ENCODE measurements at regions of chr6 and their contacts with region 1.

Region 1: DNA sequence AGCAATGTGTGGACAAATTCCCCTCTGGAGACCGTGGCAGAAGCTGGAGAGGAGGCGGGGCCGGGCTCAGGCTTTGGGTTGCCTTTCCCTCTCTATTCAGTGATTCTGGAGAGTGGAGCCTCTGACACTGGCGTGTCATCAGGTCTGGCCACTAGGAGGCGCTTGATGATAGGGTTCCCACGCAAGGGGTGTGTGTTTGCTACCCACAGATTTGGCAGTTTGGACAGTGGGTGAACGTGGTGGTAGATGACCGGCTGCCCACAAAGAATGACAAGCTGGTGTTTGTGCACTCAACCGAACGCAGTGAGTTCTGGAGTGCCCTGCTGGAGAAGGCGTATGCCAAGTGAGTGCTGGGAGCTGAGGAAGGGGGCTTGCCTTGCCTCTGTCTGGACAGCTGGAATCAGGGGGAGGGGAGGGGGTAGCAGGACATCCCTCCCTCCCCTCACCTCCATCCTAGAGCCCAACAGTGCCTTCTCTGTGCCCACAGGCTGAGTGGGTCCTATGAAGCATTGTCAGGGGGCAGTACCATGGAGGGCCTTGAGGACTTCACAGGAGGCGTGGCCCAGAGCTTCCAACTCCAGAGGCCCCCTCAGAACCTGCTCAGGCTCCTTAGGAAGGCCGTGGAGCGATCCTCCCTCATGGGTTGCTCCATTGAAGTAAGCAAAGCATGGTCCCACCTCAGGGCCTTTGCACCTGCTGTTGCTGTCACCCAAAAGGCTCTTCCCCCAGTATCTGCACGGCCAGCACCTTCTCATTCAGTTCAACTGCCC is 14.3 kb downstream of the CAPN11 start:
- DNase-seq: peak; percentile 88
- ATAC-seq: peak; percentile 90
- H3K4me3 Mint-ChIP-seq: no peak overlapping the region
- H3K27ac Mint-ChIP-seq: no peak overlapping the region
- H3K4me1 Mint-ChIP-seq: peaks cover 10% of the 10 kb centered on the region
- H3K27me3 Mint-ChIP-seq: peaks cover 5% of the 10 kb centered on the region; the same call in 1 of the 2 replicates
- CTCF ChIP-seq: peak; percentile 88

Region 2: GRCh38 chr6:42819803-42820511 is 1353.0 kb before region 1 on chr6:
- CTCF ChIA-PET with region 1: no interaction called
- POLR2A ChIA-PET with region 1: no interaction called
- DNase-seq: no peak
- ATAC-seq: peak; percentile 90
- H3K4me3 Mint-ChIP-seq: no peak overlapping the region
- H3K27ac Mint-ChIP-seq: peak overlapping the region; percentile 70
- H3K4me1 Mint-ChIP-seq: peaks cover 34% of the 10 kb centered on the region
- H3K27me3 Mint-ChIP-seq: no peaks in the 10 kb centered on the region
- CTCF ChIP-seq: no peak

Region 3: DNA sequence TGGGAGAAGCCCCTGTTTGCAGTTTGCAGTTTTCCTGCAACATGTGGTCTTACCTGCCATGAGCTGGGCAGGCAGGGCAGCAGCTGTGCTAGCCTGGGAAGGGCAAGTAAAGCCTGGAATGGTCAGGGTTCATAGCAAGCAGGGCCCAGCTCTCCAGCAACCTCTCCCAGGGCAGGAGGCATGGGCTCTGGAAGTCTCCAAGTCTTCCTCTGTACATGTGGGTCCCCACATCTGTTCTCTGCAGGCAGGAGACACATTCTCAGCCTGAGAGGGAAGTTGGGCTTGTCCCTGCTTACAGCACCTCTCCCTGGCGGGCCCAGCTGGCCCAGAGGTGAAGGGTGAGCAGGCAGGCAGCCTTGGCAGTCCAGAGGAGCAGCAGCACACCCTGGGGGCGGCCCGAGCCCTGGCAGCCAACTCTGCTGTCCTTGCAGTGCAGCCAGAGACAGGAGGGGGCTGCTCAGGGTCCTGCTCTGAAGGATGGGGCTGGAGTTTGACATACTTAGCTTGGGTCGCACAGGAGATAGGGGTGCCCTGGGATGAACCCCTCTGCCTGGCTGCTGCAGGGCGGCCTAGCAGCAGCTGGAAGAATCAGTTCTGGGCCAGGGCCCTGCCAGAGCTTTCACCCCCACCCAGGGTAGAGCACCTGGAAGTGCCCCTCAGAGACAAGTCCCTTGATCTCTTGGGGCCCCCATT is 221.7 kb before region 1 on chr6:
- CTCF ChIA-PET with region 1: no interaction called
- POLR2A ChIA-PET with region 1: no interaction called
- DNase-seq: peak; percentile 90
- ATAC-seq: peak; percentile 95
- H3K4me3 Mint-ChIP-seq: no peak overlapping the region
- H3K27ac Mint-ChIP-seq: no peak overlapping the region
- H3K4me1 Mint-ChIP-seq: peaks cover 4% of the 10 kb centered on the region
- H3K27me3 Mint-ChIP-seq: no peaks in the 10 kb centered on the region
- CTCF ChIP-seq: no peak; the same call in none of the 2 replicates

Region 4: DNA sequence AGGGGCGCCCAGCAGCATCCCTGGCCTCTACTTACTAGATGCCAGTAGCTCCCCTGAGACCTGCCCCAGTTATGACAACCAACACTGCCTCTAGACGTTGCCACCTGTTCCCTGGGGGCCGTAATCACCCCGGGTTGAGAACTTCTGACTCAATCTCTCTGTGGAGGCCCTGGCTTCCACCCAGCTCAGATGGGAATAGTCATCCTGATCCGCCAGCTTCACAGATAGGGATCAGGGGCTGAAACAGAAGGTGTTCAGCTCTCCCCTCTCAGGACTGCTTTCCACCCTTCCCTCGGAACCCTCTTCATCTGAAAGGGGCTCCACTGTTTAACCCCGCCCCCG is 10.9 kb before region 1 on chr6:
- CTCF ChIA-PET with region 1: interaction called, 22 read pairs
- POLR2A ChIA-PET with region 1: no interaction called
- DNase-seq: no peak
- ATAC-seq: no peak
- H3K4me3 Mint-ChIP-seq: no peak overlapping the region
- H3K27ac Mint-ChIP-seq: no peak overlapping the region
- H3K4me1 Mint-ChIP-seq: peaks cover 45% of the 10 kb centered on the region
- H3K27me3 Mint-ChIP-seq: no peaks in the 10 kb centered on the region
- CTCF ChIP-seq: no peak

Region 5: GRCh38 chr6:44192428-44193041 is 19.6 kb after region 1 on chr6:
- CTCF ChIA-PET with region 1: interaction called, 14 read pairs
- POLR2A ChIA-PET with region 1: interaction called, 3 read pairs
- DNase-seq: no peak
- ATAC-seq: peak; percentile 93
- H3K4me3 Mint-ChIP-seq: peak overlapping the region; percentile 32
- H3K27ac Mint-ChIP-seq: peak overlapping the region; percentile 68
- H3K4me1 Mint-ChIP-seq: peaks cover 17% of the 10 kb centered on the region
- H3K27me3 Mint-ChIP-seq: no peaks in the 10 kb centered on the region
- CTCF ChIP-seq: no peak

Region 6: DNA sequence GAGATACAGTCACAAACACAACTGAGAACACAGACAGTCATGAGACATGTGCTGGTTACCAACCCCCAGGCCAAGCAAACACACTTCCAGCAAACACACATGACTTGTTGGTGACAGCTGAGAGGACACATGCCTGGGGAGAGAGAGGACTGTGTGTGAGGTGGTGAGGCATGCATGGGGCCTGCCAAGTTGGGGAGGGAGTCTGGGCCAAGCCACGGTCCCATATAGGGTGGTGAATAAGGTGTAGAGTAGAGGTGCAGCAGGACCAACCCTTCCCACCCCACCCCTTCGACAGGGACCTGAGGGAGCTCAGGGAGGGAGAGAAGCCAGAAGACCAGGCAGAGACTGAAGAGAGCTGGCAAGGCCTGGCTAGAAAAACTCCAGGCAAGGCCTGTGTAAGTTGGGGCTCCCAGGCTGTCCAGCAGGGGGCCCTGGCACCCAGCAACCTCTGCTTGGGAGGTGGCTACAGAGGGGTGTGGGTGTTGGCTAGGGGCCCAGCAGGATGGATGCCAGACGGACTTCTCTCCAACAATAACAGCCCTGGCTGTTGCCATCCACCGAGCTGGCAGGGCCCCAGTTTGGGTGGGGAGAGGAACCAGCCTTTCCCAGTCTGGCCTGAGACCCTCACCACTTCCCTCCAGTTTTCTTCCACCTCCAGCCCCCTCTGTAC is 48.5 kb after region 1 on chr6:
- CTCF ChIA-PET with region 1: interaction called, 64 read pairs
- POLR2A ChIA-PET with region 1: interaction called, 5 read pairs
- DNase-seq: peak; percentile 70
- ATAC-seq: peak; percentile 5
- H3K4me3 Mint-ChIP-seq: no peak overlapping the region; the same call in none of the 2 replicates
- H3K27ac Mint-ChIP-seq: peak overlapping the region; percentile 95
- H3K4me1 Mint-ChIP-seq: peaks cover 69% of the 10 kb centered on the region
- H3K27me3 Mint-ChIP-seq: no peaks in the 10 kb centered on the region
- CTCF ChIP-seq: peak; percentile 45; the same call in 1 of the 2 replicates

Measured in WTC11 (cell line).